Cardiac septum (tissue), 1 donor: ENCODE measurements at regions of chr5 and their contacts with region 1.

Region 1: GRCh38 chr5:849651-850301 is 1.0 kb downstream of the ZDHHC11 start:
- DNase-seq: peak; percentile 65

Region 2: GRCh38 chr5:568061-568781 is 281.6 kb before region 1 on chr5:
- intact Hi-C with region 1: no loop called
- DNase-seq: peak; percentile 71

Region 3: GRCh38 chr5:759111-759751 is 90.5 kb before region 1 on chr5:
- intact Hi-C with region 1: loop called (anchors 5 kb)
- DNase-seq: peak; percentile 80